Activated B cell treated with CpG ODN at 0.5 μM for 24 hours (primary cell): ENCODE measurements at regions of chr2 and their contacts with region 1.

Region 1: DNA sequence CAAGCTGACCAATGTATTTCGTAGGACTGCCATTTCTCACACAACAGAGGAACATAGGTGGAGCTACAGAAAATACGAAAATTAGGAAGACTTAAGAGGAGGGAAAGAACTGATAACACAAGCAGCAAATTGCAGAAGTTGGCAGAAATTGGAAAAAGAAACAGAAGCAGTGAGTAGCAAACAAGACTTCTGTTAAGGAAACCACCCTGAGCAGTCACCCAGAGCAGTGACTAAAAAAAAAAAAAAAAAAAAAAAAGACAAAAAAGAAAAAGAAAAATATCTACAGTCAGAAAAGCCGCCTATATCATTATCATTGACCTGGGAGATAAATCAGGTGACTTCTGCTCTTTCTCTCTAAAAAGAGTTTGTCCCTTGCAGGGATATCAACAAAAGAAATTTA is 21.4 kb downstream of the STK17B start:
- DNase-seq: no peak
- ATAC-seq: peak; percentile 71
- H3K4me3 Mint-ChIP-seq: peak overlapping the region; percentile 70
- H3K27ac Mint-ChIP-seq: peak overlapping the region; percentile 93
- H3K4me1 Mint-ChIP-seq: peaks cover 78% of the 10 kb centered on the region
- H3K27me3 Mint-ChIP-seq: no peaks in the 10 kb centered on the region
- CTCF ChIP-seq: no peak

Region 2: DNA sequence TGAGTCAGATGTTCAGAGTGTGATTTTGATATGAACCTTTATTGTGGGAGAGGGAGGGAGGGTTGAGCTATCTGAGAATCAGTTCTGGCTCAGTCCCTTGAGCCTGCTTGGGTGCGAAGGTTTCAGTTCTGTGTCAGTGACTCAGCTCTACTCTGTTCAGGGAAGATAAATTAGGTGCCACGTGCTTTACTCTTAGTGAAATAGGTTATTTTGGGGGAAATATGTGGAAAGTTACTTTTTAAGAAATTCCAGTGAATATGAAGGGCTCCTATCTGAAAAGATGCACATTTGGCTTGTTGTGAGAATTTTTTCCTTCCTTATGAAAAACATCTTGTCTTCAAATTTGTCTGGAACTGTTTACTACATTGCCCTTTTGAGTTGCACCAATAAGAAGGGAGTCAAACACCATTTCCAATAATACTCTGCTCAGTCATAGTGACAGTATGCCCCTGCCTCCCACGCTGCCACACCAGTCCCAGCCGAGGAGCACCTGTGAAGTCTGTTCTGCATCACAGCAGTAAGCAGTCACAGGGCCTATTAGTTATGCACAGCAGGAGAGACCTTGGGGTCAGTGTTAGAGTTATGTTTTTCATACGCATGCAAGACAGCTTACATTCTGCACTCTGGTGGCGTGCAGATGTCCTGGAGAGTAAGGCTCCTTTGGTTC is 48.5 kb before region 1 on chr2:
- CTCF ChIA-PET with region 1: no interaction called
- POLR2A ChIA-PET with region 1: interaction called, 4 read pairs
- intact Hi-C with region 1: loop called (anchors 1 kb)
- DNase-seq: peak; percentile 34
- ATAC-seq: peak; percentile 87
- H3K4me3 Mint-ChIP-seq: peak overlapping the region; percentile 40
- H3K27ac Mint-ChIP-seq: peak overlapping the region; percentile 81
- H3K4me1 Mint-ChIP-seq: peaks cover 77% of the 10 kb centered on the region
- H3K27me3 Mint-ChIP-seq: no peaks in the 10 kb centered on the region
- CTCF ChIP-seq: no peak

Region 3: DNA sequence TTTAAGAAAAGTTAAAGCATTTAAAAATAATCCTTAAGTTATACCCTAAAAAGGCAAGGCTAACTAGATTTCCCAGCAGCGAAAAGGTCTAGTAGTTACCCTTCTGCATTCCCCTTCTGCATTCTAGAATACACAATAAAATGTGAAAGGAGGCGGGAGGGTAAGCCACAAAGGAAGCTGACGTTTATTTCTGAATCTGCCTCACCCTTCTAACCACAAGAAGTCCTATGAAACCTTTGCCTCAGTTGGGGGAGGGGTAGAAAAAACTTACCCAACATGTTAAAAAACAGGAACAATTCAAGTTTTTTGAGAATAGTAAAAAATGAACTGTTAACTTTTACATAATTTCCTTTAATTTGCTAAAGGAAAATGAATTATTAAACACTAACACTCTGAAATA is 10.2 kb after region 1 on chr2:
- CTCF ChIA-PET with region 1: no interaction called
- POLR2A ChIA-PET with region 1: interaction called, 17 read pairs
- intact Hi-C with region 1: loop called (anchors 1 kb)
- DNase-seq: no peak
- ATAC-seq: peak; percentile 75
- H3K4me3 Mint-ChIP-seq: peak overlapping the region; percentile 57
- H3K27ac Mint-ChIP-seq: peak overlapping the region; percentile 84
- H3K4me1 Mint-ChIP-seq: peaks cover 86% of the 10 kb centered on the region
- H3K27me3 Mint-ChIP-seq: no peaks in the 10 kb centered on the region
- CTCF ChIP-seq: no peak

Region 4: DNA sequence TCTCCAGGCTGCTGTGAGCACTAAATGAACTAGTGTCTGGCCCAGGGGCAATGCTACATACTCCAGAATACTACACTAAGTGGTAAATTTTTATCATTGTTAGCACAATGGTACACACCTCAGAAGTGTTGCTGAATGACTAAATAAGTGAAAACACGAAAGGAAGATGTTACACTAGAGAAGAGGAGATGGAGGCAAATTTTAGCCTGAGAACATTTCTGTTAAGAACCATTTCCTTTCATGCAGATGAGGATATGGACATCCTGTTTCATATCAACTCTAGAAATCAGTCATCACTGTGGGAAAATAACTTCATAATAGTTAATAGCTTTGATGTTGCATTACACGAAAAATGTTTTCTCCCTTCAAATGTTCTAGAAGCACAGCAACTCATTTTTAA is 139.1 kb after region 1 on chr2:
- CTCF ChIA-PET with region 1: no interaction called
- POLR2A ChIA-PET with region 1: no interaction called
- intact Hi-C with region 1: no loop called
- DNase-seq: no peak
- ATAC-seq: peak; percentile 52
- H3K4me3 Mint-ChIP-seq: peak overlapping the region; percentile 7
- H3K27ac Mint-ChIP-seq: peak overlapping the region; percentile 30
- H3K4me1 Mint-ChIP-seq: peaks cover 59% of the 10 kb centered on the region
- H3K27me3 Mint-ChIP-seq: no peaks in the 10 kb centered on the region
- CTCF ChIP-seq: no peak